ENCODE measurements at regions of chr1 and their contacts with region 1.

Region 1: GRCh38 chr1:20530906-20531305 is 21.5 kb upstream of the FAM43B start:
- DNase-seq: no peak
- ATAC-seq: no peak
- H3K4me3 ChIP-seq: no peak overlapping the region
- H3K27ac ChIP-seq: no peak overlapping the region
- H3K4me1 ChIP-seq: no peaks in the 10 kb centered on the region
- H3K27me3 ChIP-seq: peaks cover 75% of the 10 kb centered on the region
- CTCF ChIP-seq: no peak
- POLR2A ChIP-seq: no peak
- RAD21 ChIP-seq: no peak

Region 2: GRCh38 chr1:20560966-20561365 is 30.1 kb after region 1 on chr1:
- CTCF ChIA-PET with region 1: interaction called, 5 read pairs
- POLR2A ChIA-PET with region 1: no interaction called
- dilution Hi-C with region 1: no loop called
- in situ Hi-C with region 1: loop called (anchors 5 kb)
- intact Hi-C with region 1: loop called (anchors 5 kb)
- DNase-seq: no peak
- ATAC-seq: no peak
- H3K4me3 ChIP-seq: no peak overlapping the region
- H3K27ac ChIP-seq: no peak overlapping the region
- H3K4me1 ChIP-seq: no peaks in the 10 kb centered on the region
- H3K27me3 ChIP-seq: peaks cover 58% of the 10 kb centered on the region
- CTCF ChIP-seq: no peak
- POLR2A ChIP-seq: no peak
- RAD21 ChIP-seq: no peak

Region 3: DNA sequence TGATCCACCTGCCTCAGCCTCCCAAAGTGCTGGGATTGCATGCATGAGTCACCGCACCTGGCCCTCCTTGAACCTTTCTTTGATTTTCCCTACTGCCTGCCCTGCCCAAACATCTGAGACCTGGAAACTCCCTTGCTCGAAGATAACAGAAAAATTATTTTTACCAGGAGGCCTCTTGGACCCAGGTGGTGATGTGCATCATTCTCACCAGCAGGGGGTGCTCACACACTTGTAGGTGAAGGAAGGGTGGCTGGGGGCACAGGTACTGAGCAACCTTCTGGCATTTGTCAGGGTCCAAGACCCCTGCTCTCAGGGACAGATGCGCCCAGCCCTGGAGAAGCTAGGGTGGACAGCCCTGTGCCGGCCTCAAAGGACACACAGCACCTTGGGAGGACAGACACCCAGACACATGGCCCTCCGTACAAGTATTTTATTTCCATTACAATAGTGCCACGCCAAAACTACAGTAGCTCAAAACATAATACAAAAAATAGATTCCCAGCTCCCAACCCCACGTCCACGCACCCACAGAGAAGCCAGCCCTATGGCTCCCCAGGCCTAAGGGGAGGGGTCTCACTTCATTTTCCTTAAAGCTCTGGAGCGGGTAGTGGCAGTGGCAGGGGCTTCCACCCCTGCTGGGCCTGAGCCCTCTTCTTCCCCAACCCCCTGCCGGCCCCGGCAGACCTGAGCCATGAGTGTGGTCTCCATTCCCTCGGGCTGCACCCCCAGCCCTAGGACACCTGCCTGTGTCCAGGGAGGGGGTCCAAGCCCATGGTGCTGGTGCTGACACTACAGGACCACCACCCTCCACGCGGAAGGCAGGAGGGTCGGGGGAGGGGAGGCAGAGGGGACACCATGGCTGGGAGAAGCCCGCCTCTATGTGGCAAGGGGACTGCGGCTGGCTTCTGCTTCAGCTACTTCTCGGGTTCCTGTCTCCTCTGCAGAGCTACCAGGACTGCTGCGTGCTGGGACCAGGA is 686.2 kb after region 1 on chr1:
- CTCF ChIA-PET with region 1: no interaction called
- POLR2A ChIA-PET with region 1: no interaction called
- dilution Hi-C with region 1: no loop called
- in situ Hi-C with region 1: loop called (anchors 25 kb)
- intact Hi-C with region 1: no loop called
- DNase-seq: peak; percentile 39
- ATAC-seq: peak; percentile 50
- H3K4me3 ChIP-seq: no peak overlapping the region
- H3K27ac ChIP-seq: no peak overlapping the region
- H3K4me1 ChIP-seq: no peaks in the 10 kb centered on the region
- H3K27me3 ChIP-seq: no peaks in the 10 kb centered on the region
- CTCF ChIP-seq: peak; percentile 57
- POLR2A ChIP-seq: no peak
- RAD21 ChIP-seq: peak; percentile 44; the same call in 1 of the 2 replicates